ENCODE measurements at regions of chr13 and their contacts with region 1.

Region 1: DNA sequence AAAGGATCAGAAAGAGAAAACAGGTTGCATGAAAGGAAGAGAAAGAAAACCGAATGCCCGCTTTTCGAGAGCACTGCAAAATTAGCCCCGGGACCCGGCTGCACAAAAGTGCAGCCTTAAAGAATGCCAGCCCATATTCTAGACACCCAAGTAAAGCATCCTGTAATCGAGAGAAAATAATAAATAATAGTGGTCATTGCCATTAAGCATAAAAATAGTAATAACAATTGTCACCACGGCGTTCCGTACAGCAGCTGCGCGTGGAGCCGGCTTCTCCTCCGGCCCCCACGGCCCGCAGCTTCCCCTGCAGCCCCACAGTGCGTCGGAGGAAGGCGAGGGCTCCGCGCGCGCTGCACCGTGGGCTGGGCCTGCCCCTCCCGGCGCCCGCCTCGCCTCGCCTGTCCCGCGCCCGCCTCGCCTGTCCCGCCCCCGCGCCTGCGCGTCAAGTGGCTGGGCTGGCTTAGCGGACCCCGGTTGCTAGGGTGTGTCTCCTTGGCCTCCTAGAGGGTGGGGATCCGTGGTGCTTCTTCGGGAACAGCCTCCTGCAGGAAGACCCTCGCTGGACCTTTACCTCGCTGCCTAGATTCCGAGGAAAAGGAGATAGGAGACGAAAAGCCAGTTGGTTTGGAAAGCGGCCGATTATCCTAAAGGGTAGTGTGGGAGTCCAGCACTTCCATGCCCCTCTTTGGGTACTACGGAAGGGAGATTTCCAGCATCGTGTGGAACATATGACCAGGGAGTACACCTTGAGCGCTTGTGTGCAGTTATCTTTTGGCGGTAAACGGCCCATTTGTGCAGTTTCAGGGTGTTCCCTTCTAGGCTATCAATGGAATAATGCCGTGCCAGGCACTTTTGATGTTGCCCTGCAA is at the start of gene LRRC63:
- DNase-seq: peak; percentile 80 to 85 (median 84)
- H3K4me3 ChIP-seq: peak within 1 kb of the TSS; percentile 49 to 56
- H3K4me3 Mint-ChIP-seq: peak within 1 kb of the TSS; percentile 85 to 97 (median 94)
- H3K27ac ChIP-seq: peak within 1 kb of the TSS; percentile 75
- H3K27ac Mint-ChIP-seq: peak within 1 kb of the TSS; percentile 83 to 97 (median 96)
- H3K4me1 ChIP-seq: peaks cover 18% of the 10 kb centered on the region
- H3K4me1 Mint-ChIP-seq: peaks cover 9 to 30% (median 18%) of the 10 kb centered on the region in 4 donors
- H3K27me3 ChIP-seq: no peaks in the 10 kb centered on the region
- H3K27me3 Mint-ChIP-seq: no peaks in the 10 kb centered on the region
- total RNA-seq, gene LRRC63: 0.49 to 0.75 TPM

Region 2: GRCh38 chr13:45441633-45442032 is 770.1 kb before region 1 on chr13:
- CTCF ChIA-PET with region 1: no interaction called
- POLR2A ChIA-PET with region 1: no interaction called
- intact Hi-C with region 1: no loop called
- DNase-seq: no peak
- H3K4me3 ChIP-seq: no peak overlapping the region
- H3K4me3 Mint-ChIP-seq: peak overlapping the region in 5 of 8 donors; percentile 14 to 43 (median 34)
- H3K27ac ChIP-seq: no peak overlapping the region
- H3K27ac Mint-ChIP-seq: peak overlapping the region in 4 of 7 donors; percentile 13 to 66 (median 41)
- H3K4me1 ChIP-seq: peaks cover 7% of the 10 kb centered on the region
- H3K4me1 Mint-ChIP-seq: peaks cover 7 to 8% (median 8%) of the 10 kb centered on the region in 4 donors
- H3K27me3 ChIP-seq: no peaks in the 10 kb centered on the region
- H3K27me3 Mint-ChIP-seq: peaks cover 0 to 2% of the 10 kb centered on the region in 2 donors

Region 3: DNA sequence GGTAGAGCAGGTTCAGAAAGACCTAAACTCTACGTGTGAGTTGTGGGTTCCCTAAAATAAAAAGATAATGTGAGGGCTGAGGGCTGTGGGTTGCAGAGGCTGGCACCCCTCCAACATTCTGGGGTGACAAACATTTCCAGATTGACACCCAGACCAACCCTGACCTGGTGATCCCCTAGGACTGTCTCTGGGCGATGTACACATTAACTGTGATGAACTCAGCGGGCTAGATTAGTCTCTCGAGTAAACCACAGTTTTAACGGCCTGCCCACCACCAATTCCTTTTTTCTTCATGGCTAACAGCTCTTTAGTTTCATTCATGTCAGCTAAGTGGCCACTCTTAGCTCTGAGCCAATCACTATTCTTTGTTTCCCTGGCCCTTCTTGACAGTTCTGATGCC is 385.0 kb before region 1 on chr13:
- CTCF ChIA-PET with region 1: no interaction called
- POLR2A ChIA-PET with region 1: no interaction called
- intact Hi-C with region 1: no loop called
- DNase-seq: no peak
- H3K4me3 ChIP-seq: no peak overlapping the region
- H3K4me3 Mint-ChIP-seq: no peak overlapping the region
- H3K27ac ChIP-seq: no peak overlapping the region
- H3K27ac Mint-ChIP-seq: no peak overlapping the region
- H3K4me1 ChIP-seq: no peaks in the 10 kb centered on the region
- H3K4me1 Mint-ChIP-seq: no peaks in the 10 kb centered on the region
- H3K27me3 ChIP-seq: no peaks in the 10 kb centered on the region
- H3K27me3 Mint-ChIP-seq: peaks cover 0 to 1% of the 10 kb centered on the region in 2 donors

Region 4: DNA sequence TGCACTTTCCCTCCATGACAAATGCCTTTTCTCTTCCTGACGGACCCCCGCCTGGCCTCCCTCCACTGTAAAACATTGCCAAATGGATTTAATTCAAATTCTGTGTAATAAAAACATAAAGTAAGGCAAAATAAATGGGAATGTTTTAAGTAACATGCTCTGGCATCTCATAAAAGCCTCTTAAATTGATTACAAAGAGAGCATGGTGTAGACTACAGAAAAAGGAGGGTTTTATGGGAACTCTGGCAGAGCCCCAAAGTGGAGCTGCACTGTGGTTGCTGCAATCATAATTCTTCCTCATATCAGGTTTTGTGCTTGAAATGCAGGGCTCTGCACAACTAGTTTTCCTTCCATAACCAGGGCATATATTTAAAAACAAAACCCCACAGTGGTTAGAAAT is 315.8 kb before region 1 on chr13:
- CTCF ChIA-PET with region 1: no interaction called
- POLR2A ChIA-PET with region 1: no interaction called
- intact Hi-C with region 1: no loop called
- DNase-seq: no peak
- H3K4me3 ChIP-seq: no peak overlapping the region
- H3K4me3 Mint-ChIP-seq: no peak overlapping the region
- H3K27ac ChIP-seq: no peak overlapping the region
- H3K27ac Mint-ChIP-seq: no peak overlapping the region
- H3K4me1 ChIP-seq: no peaks in the 10 kb centered on the region
- H3K4me1 Mint-ChIP-seq: no peaks in the 10 kb centered on the region
- H3K27me3 ChIP-seq: no peaks in the 10 kb centered on the region
- H3K27me3 Mint-ChIP-seq: peaks cover 15 to 16% of the 10 kb centered on the region in 2 donors

Region 5: DNA sequence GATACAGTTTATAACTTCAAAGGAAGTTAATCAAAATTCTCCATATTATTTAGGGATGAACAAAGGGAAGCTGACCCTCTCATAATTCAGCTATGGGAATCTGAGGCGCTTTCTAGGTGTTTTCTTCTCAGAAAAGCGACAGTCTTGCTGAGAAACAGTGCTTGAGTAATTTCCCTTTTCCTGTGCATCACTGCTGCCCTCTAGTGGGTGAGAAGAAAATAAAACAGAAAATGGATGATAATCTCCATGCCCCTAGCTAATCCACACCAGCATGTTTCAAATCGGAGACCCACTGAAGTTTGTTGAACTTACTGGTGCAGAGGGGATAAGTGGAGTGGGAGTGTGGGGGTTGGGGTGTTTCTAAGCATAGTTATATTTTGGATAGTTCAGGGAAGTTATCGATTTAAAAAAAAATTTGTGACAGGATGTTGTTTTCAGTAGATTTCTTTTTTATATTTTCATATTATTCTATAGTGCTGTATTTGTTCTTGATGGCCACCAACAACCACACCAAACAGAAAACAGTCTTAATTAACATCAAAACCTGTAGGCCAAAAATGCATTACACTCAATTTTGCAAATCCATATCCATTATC is 51.1 kb before region 1 on chr13:
- CTCF ChIA-PET with region 1: interaction called, 12 read pairs
- POLR2A ChIA-PET with region 1: interaction called, 7 read pairs
- intact Hi-C with region 1: loop called (anchors 1 kb)
- DNase-seq: peak; percentile 54 to 77 (median 73)
- H3K4me3 ChIP-seq: peak overlapping the region; percentile 2 to 23
- H3K4me3 Mint-ChIP-seq: peak overlapping the region; percentile 12 to 87 (median 82)
- H3K27ac ChIP-seq: peak overlapping the region; percentile 73
- H3K27ac Mint-ChIP-seq: peak overlapping the region; percentile 84 to 96 (median 94)
- H3K4me1 ChIP-seq: peaks cover 54% of the 10 kb centered on the region
- H3K4me1 Mint-ChIP-seq: peaks cover 44 to 59% (median 51%) of the 10 kb centered on the region in 4 donors
- H3K27me3 ChIP-seq: no peaks in the 10 kb centered on the region
- H3K27me3 Mint-ChIP-seq: no peaks in the 10 kb centered on the region

Region 6: GRCh38 chr13:46168341-46168740 is 43.4 kb before region 1 on chr13:
- CTCF ChIA-PET with region 1: interaction called, 10 read pairs
- POLR2A ChIA-PET with region 1: interaction called, 29 read pairs
- intact Hi-C with region 1: no loop called
- DNase-seq: peak in 1 of 5 donors; percentile 81
- H3K4me3 ChIP-seq: peak overlapping the region; percentile 9 to 38
- H3K4me3 Mint-ChIP-seq: peak overlapping the region; percentile 62 to 92 (median 84)
- H3K27ac ChIP-seq: peak overlapping the region; percentile 74
- H3K27ac Mint-ChIP-seq: peak overlapping the region; percentile 85 to 99 (median 95)
- H3K4me1 ChIP-seq: peaks cover 99% of the 10 kb centered on the region
- H3K4me1 Mint-ChIP-seq: peaks cover 72 to 96% (median 85%) of the 10 kb centered on the region in 4 donors
- H3K27me3 ChIP-seq: no peaks in the 10 kb centered on the region
- H3K27me3 Mint-ChIP-seq: no peaks in the 10 kb centered on the region

Region 7: DNA sequence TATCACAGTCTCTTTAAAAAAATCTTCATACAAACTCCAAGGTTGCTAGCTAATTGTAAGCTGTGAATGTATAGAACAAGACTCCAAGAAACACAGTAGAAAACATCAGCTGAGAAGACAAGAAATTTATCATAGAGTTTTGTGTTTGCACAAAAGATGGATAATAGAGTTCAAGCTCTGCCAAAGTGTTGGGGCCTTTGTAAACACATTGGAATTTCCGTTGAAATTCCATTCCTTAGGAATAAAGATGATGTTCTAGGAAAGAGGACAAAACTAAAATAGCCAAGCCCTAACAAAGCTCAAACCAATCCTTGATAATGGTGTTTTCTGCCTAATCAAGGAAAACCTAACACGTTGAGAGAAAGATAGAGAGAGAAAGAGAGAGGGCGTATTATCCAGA is 20.6 kb after region 1 on chr13:
- CTCF ChIA-PET with region 1: no interaction called
- POLR2A ChIA-PET with region 1: no interaction called
- intact Hi-C with region 1: no loop called
- DNase-seq: no peak
- H3K4me3 ChIP-seq: no peak overlapping the region
- H3K4me3 Mint-ChIP-seq: no peak overlapping the region
- H3K27ac ChIP-seq: no peak overlapping the region
- H3K27ac Mint-ChIP-seq: no peak overlapping the region
- H3K4me1 ChIP-seq: no peaks in the 10 kb centered on the region
- H3K4me1 Mint-ChIP-seq: no peaks in the 10 kb centered on the region
- H3K27me3 ChIP-seq: no peaks in the 10 kb centered on the region
- H3K27me3 Mint-ChIP-seq: peaks cover 0 to 2% of the 10 kb centered on the region in 2 donors

Measured in CD4-positive, alpha-beta memory T cell (primary cell).